Right cardiac atrium (tissue), 5 donors: ENCODE measurements at regions of chr1 and their contacts with region 1.

Region 1: DNA sequence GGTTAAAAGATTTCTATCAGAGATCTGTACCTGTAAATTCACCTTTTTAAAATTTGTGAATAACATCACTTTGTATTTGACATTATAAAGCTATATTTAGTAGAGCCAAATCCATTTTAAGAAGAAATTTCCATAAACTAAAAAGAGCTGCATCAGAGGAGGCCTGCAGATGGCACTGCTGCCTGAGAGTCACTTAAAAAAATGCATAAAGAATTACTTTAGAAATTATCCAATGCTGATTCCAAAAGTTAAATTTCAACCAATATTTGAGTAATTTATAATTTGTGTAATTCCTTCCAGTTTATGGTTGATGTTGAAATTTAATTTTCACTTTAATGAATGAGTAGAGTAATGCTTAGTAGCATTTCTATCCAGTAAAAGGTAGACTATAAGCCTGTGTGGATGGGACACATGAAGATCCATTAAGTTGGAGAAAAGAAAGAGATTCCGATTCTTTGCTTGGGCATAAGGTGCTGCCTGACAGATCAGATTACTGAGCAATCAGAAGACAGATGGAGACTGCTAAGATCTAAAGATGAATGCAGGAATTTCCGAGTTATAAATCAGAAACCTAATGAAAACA is 20.7 kb upstream of the RPE65 start:
- DNase-seq: no peak
- ATAC-seq: no peak
- H3K4me3 ChIP-seq: no peak overlapping the region
- H3K27ac ChIP-seq: no peak overlapping the region
- H3K4me1 ChIP-seq: no peaks in the 10 kb centered on the region
- H3K27me3 ChIP-seq: no peaks in the 10 kb centered on the region

Region 2: GRCh38 chr1:68571454-68572235 is 101.2 kb after region 1 on chr1:
- intact Hi-C with region 1: loop called in 1 of 4 experiments (anchors 10 kb)
- DNase-seq: no peak
- ATAC-seq: peak in 1 of 2 donors; percentile 26
- H3K4me3 ChIP-seq: no peak overlapping the region
- H3K27ac ChIP-seq: no peak overlapping the region
- H3K4me1 ChIP-seq: peaks cover 2% of the 10 kb centered on the region
- H3K27me3 ChIP-seq: no peaks in the 10 kb centered on the region

Region 3: GRCh38 chr1:68585351-68585750 is 114.9 kb after region 1 on chr1:
- intact Hi-C with region 1: no loop called
- DNase-seq: no peak
- ATAC-seq: no peak
- H3K4me3 ChIP-seq: no peak overlapping the region
- H3K27ac ChIP-seq: no peak overlapping the region
- H3K4me1 ChIP-seq: no peaks in the 10 kb centered on the region
- H3K27me3 ChIP-seq: no peaks in the 10 kb centered on the region